ENCODE measurements at regions of chr22 and their contacts with region 1.

Region 1: DNA sequence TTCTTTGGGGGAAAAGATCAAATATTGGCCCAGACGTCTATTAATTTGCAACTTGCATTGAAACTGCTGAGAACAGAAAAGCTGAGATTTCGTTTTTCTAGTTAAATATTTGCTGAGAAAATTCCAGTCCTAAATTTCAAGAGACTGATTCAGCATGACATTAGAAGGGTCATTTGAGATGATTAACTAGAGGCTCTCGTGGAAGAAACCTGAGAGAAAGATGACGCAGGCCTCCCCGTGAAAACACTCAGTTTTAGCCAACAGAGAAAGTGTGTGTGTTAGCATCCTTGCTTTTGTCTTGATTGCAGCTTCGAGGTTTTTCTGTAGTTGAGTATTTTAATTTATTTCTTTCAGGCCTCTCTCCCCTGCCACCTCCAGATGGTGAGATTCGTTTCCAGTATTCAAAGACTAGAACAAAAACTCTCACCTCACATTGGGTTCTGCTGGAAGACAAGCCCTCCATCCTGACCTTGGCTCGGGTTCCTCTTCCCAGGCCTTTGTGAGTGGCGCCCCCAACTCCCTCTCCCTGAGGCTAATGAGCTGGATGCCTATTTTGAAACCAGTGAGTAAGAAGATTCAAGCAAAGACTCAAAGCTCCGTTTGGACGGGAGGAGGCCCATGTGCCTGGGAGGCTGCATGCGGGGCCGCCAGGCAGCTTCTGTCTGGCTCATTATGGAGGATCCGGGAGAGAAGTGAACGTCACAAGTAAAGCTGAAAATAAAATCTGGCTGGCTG is 52.4 kb downstream of the CELSR1 start:
- DNase-seq: no peak
- H3K4me3 ChIP-seq: no peak overlapping the region
- H3K4me3 Mint-ChIP-seq: peak overlapping the region; percentile 5
- H3K27ac Mint-ChIP-seq: peak overlapping the region; percentile 32
- H3K4me1 ChIP-seq: peaks cover 16% of the 10 kb centered on the region
- H3K4me1 Mint-ChIP-seq: peaks cover 7% of the 10 kb centered on the region
- H3K27me3 ChIP-seq: no peaks in the 10 kb centered on the region
- H3K27me3 Mint-ChIP-seq: no peaks in the 10 kb centered on the region
- CTCF ChIP-seq: no peak

Region 2: DNA sequence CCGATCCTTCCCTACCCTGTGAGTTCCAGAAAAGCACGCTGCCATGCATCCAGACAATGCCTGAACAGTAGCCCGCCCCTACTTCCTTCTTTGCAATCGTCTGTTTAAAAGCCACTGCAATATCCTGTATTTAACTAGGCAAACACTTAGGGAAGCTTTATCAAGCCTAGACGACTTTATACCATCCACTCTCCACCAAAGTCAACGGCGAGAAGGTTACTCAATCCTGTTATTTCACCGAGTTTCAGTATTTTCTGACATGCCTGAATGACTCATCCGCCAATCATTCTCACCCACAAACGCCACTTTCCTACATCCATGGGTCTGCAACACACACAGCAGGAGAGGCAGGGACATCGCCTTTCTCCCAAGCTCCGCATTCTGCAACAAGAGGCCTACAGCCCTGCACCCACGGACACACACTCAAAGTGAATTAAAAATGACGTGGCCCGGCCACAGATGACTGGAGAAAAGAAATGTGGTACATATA is 43.1 kb after region 1 on chr22:
- CTCF ChIA-PET with region 1: no interaction called
- POLR2A ChIA-PET with region 1: no interaction called
- intact Hi-C with region 1: loop called (anchors 2 kb)
- DNase-seq: peak; percentile 78 to 79
- H3K4me3 ChIP-seq: no peak overlapping the region
- H3K4me3 Mint-ChIP-seq: peak overlapping the region; percentile 62
- H3K27ac Mint-ChIP-seq: peak overlapping the region; percentile 75
- H3K4me1 ChIP-seq: peaks cover 10% of the 10 kb centered on the region
- H3K4me1 Mint-ChIP-seq: peaks cover 32% of the 10 kb centered on the region
- H3K27me3 ChIP-seq: no peaks in the 10 kb centered on the region
- H3K27me3 Mint-ChIP-seq: no peaks in the 10 kb centered on the region
- CTCF ChIP-seq: no peak